ENCODE measurements at regions of chr2 and their contacts with region 1.

Region 1: DNA sequence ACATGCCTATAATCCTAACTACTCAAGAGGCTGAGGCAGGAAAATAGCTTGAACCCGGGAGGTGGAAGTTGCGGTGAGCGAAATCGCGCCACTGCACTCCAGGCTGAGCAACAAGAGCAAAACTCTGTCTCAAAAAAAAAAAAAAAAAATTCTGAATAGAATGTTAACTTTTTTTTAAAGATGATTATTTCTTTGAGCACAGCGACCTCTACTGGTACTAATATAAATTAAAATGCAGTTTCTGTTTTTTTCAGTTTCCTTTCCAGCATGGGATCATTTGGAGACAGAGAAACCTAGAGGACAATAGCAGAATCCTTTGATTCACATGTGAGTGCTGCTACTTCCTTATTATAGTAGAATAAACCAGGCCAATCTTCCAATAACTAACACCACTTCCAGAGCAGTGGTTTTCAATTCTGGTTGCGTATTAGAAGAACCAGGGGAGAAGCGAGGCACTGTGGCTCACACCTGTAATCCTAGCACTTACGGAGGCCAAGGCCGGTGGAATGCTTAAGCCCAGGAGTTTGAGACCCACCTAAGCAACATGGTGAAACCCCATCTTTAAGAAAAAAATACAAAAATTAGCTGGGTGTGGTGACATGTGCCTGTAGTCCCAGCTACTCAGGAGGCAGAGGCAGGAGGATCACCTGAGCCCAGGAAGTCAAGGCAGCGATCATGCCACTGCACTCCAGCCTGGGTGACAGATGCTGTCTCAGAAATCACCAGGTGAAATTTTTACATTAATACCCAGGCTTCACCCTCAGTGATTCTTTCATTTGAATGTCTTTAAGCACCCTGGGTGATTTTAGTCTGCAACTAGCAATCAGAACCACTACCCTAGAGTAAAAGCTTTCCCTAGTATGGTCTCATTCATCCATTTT is 10.1 kb downstream of the SRSF7 start:
- DNase-seq: no peak
- H3K4me3 ChIP-seq: no peak overlapping the region
- H3K27ac ChIP-seq: no peak overlapping the region
- H3K27me3 ChIP-seq: no peaks in the 10 kb centered on the region
- CTCF ChIP-seq: peak; percentile 31

Region 2: DNA sequence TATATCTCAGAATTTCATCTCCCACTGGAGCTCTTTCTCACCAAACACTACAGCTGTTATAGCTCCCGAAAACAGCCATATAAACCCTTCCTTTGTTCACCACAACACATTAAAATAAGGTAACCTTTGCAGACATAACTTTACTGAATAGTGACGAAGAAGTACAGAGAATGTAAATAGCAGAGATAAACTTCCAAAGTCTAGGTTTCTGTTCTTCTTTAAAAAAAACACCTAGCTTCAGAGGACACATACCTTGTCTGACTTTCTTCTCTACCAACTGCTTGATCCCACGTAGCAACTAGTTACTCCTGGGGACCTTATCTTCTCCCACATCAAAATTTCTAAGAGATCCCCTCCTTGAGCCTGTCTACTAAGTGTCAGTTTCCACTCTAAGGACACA is 396.3 kb before region 1 on chr2:
- in situ Hi-C with region 1: no loop called
- DNase-seq: no peak
- H3K4me3 ChIP-seq: no peak overlapping the region
- H3K27ac ChIP-seq: no peak overlapping the region
- H3K27me3 ChIP-seq: no peaks in the 10 kb centered on the region
- CTCF ChIP-seq: no peak

Region 3: GRCh38 chr2:38377050-38377828 is 363.9 kb before region 1 on chr2 and contains the start of gene ATL2:
- in situ Hi-C with region 1: no loop called
- DNase-seq: peak; percentile 95
- H3K4me3 ChIP-seq: peak within 1 kb of the TSS; percentile 77
- H3K27ac ChIP-seq: peak within 1 kb of the TSS; percentile 81
- H3K27me3 ChIP-seq: no peaks in the 10 kb centered on the region
- CTCF ChIP-seq: no peak

Region 4: DNA sequence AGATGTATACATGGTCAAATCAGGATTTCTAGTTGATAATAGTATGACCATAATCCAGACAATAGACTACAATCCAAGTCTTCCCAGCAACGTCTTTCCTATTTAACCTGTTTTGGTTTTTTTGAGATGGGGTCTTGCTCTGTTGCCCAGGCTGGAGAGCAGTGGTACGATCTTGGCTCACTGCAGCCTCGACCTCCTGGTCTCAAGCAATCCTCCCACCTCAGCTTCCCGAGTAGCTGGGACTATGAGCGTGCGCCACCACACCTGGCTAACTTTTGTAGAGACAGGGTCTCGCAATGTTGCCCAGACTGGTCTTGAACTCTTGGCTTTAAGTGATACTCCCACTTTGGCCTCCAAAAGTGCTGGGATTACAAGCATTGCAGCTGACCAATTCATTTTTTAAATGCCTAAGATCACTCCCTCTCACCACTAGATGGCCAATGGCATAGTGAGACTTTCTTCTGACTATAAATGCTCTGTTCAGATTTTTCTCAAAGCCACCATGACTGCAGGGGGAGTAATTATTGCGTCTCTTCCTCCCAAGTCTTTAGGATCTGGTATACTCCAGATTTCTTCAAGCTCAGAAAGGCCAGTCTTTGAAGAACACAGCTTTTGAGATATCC is 186.0 kb before region 1 on chr2:
- in situ Hi-C with region 1: loop called (anchors 25 kb)
- DNase-seq: peak; percentile 44
- H3K4me3 ChIP-seq: no peak overlapping the region
- H3K27ac ChIP-seq: no peak overlapping the region
- H3K27me3 ChIP-seq: no peaks in the 10 kb centered on the region
- CTCF ChIP-seq: peak; percentile 65

Region 5: DNA sequence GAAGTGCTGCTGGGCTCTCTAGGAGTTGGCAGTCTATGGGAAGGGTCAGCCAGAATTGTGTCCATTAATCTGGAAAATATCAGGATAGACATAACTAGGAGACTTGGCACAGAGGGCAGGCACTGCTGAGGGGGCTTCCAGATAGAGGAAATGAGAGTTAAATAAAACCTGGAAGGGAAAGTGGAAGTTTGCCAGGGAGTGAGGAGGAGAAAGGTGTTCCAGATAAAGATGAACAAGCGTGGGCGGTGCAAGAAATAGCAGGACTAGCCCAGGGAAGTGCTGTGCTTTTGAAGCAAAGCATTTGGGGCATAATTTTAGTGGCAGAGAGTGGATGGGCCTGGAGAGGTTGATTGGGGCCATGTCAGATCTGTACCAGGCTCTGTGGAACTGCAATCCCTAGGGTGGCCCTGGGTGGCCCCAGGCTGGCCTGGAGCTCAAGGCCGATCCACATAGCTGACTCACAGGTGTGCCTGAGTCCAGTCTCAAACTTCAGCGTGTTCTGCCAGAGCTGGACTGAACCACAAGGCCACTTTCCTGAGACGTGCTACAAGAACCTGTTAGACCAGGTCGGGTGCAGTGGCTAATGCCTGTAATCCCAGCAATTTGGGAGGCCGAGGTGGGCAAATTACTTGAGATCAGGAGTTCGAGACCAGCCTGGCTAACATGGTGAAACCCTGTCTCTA is 48.3 kb before region 1 on chr2:
- in situ Hi-C with region 1: no loop called
- DNase-seq: no peak
- H3K4me3 ChIP-seq: no peak overlapping the region
- H3K27ac ChIP-seq: no peak overlapping the region
- H3K27me3 ChIP-seq: no peaks in the 10 kb centered on the region
- CTCF ChIP-seq: no peak